ENCODE measurements at regions of chr7 and their contacts with region 1.

Region 1: DNA sequence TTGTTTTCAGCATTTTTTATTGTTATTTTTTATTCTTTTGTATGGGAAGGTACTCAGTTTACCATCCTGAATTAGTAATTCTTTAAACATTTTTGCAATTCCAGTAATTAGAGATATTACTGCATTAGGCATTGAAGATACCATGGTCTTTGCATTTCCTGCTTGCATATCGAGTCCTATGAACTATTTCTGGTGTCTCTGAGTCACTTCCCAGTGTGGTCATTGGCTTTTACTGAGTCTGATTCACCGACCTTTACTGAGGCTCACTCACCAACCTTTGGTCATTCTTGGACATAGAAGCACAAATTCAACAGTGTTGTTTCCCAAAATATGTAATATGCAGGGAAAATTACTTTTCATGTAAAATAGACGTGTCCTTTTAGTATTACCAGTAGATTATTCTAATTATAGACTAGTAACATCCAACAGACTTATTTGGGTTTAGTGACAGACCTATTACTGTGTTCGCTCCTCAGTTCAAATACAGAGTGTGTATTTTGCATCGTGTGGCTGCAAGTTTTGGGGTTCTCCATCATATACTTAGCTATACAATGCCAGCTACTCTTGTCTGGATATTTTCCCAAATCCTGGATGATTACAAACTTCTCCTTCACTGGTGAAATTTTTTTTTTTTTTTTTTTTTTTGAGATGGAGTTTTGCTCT is 180.7 kb upstream of the PRSS1 start:
- DNase-seq: no peak
- H3K4me3 ChIP-seq: no peak overlapping the region
- H3K27ac ChIP-seq: peak overlapping the region in 1 of 2 experiments; percentile 61; a peak in 2 of 4 replicates
- H3K4me1 ChIP-seq: peaks cover 0 to 28% of the 10 kb centered on the region in 2 experiments; a peak in 3 of 4 replicates
- H3K27me3 ChIP-seq: no peaks in the 10 kb centered on the region
- CTCF ChIP-seq: no peak
- EP300 ChIP-seq: peak in 1 of 2 experiments; percentile 91; a peak in 2 of 4 replicates
- RAD21 ChIP-seq: no peak

Region 2: GRCh38 chr7:142557971-142558582 is 10.5 kb before region 1 on chr7:
- CTCF ChIA-PET with region 1: interaction called, 16 read pairs
- POLR2A ChIA-PET with region 1: no interaction called
- DNase-seq: peak; percentile 51
- H3K4me3 ChIP-seq: no peak overlapping the region
- H3K27ac ChIP-seq: peak overlapping the region; percentile 69 to 72; a peak in 3 of 4 replicates
- H3K4me1 ChIP-seq: peaks cover 15 to 48% of the 10 kb centered on the region in 2 experiments
- H3K27me3 ChIP-seq: no peaks in the 10 kb centered on the region
- CTCF ChIP-seq: peak; percentile 97
- EP300 ChIP-seq: no peak
- RAD21 ChIP-seq: peak; percentile 45

Region 3: DNA sequence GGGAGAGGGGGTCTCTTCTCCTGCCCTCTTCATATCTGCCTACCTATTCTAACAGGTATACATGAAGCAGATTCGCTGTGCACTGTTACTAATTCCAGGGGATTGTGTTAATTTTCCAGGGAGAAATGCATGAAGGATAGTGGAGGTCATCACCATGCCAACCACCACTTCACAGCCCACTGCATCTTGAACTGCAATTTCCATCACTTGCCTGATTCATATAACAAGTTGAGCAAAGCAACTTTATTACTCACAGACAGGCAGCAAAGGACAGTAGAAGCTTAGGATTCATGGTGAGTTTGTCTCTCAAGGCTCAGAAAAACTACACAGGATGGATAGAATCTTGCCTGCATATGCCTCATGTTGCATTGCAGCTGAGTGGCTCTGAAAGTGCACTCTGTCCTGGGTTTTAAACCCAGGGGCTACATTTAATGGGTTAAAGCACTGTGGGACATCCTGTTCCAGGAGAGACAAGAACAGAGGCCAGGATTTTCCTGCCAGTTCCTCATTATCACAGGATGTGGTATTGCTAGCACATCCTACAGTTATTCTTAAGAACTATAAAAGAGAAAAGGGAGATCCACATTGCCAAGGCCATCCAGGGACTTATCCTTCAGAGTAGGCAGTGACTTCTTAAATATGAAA is 43.8 kb after region 1 on chr7:
- CTCF ChIA-PET with region 1: no interaction called
- POLR2A ChIA-PET with region 1: no interaction called
- DNase-seq: peak; percentile 63
- H3K4me3 ChIP-seq: no peak overlapping the region
- H3K27ac ChIP-seq: peak overlapping the region in 1 of 2 experiments; percentile 98; a peak in 3 of 4 replicates
- H3K4me1 ChIP-seq: peaks cover 0 to 17% of the 10 kb centered on the region in 2 experiments; a peak in 2 of 4 replicates
- H3K27me3 ChIP-seq: no peaks in the 10 kb centered on the region; the same call in 1 of the 2 replicates
- CTCF ChIP-seq: no peak
- EP300 ChIP-seq: peak; percentile 23 to 68; a peak in 2 of 4 replicates
- RAD21 ChIP-seq: no peak